ENCODE measurements at regions of chr14 and their contacts with region 1.

Region 1: DNA sequence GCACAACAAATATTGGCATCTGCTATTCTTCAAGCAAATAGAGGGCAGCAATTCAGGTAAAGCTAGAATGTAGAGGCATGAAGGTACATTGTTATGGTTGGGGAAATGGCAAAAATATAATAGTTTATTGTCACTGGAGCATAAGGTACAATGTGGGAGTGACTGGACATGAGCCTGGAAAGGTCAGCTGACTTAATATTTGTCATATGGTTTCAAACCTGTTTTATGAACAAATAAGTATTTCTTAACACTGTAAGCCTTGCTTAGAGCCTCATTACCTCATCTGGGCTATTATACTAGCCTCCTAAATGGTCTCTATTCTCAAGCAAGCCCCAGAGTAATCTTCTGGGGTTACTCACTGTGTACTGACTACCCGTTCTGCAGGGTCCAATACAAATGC is 33.7 kb downstream of the FAM177A1 start:
- DNase-seq: no peak
- H3K4me3 ChIP-seq: no peak overlapping the region
- H3K27ac ChIP-seq: no peak overlapping the region
- H3K4me1 ChIP-seq: no peaks in the 10 kb centered on the region
- H3K27me3 ChIP-seq: no peaks in the 10 kb centered on the region
- CTCF ChIP-seq: no peak

Region 2: DNA sequence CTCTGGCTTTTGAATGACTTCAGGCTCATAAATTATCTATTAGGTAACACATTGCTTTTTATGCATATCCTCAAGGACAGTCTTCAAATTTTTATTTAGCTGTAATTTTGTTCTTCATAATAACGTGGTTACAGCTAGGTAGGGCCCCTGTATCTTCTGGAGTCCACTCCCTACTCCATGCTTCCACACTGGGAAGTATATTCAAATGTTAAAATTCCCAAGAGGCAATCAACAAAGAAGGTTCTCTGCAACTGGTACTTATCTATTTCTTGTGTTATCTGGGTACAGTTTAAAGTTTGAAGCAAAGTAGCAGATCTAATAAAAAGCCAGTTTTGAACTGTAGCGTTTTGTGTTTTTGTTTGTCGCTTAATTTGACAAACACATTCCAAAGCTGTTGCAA is 184.5 kb before region 1 on chr14:
- CTCF ChIA-PET with region 1: no interaction called
- POLR2A ChIA-PET with region 1: no interaction called
- intact Hi-C with region 1: no loop called
- DNase-seq: no peak
- H3K4me3 ChIP-seq: no peak overlapping the region
- H3K27ac ChIP-seq: no peak overlapping the region
- H3K4me1 ChIP-seq: no peaks in the 10 kb centered on the region
- H3K27me3 ChIP-seq: no peaks in the 10 kb centered on the region
- CTCF ChIP-seq: no peak

Region 3: GRCh38 chr14:34999500-34999899 is 80.2 kb before region 1 on chr14:
- CTCF ChIA-PET with region 1: no interaction called
- POLR2A ChIA-PET with region 1: no interaction called
- intact Hi-C with region 1: no loop called
- DNase-seq: no peak
- H3K4me3 ChIP-seq: no peak overlapping the region
- H3K27ac ChIP-seq: no peak overlapping the region
- H3K4me1 ChIP-seq: peaks cover 15% of the 10 kb centered on the region
- H3K27me3 ChIP-seq: no peaks in the 10 kb centered on the region
- CTCF ChIP-seq: no peak

Region 4: DNA sequence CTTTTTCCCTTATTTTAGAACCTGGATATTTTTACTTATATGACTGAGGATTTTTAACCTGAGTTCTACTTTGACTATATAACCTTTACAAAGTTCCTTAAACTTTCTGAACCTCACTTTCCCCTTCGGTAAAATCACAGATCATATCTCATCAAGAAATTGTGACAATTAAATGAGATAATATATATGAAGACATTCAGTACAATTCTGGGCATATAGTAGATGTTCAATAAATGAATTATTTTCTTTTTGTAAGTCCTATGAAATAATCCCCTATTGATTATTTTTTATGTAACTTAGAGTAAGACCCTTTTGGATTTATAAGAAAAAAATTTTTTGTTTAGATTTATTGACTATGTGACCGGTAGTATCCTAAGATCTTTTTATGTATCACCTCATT is 51.3 kb before region 1 on chr14:
- CTCF ChIA-PET with region 1: no interaction called
- POLR2A ChIA-PET with region 1: interaction called, 14 read pairs
- intact Hi-C with region 1: no loop called
- DNase-seq: no peak
- H3K4me3 ChIP-seq: no peak overlapping the region
- H3K27ac ChIP-seq: no peak overlapping the region
- H3K4me1 ChIP-seq: no peaks in the 10 kb centered on the region
- H3K27me3 ChIP-seq: no peaks in the 10 kb centered on the region
- CTCF ChIP-seq: no peak

Region 5: GRCh38 chr14:35341446-35342159 is 261.9 kb after region 1 on chr14:
- CTCF ChIA-PET with region 1: no interaction called
- POLR2A ChIA-PET with region 1: no interaction called
- intact Hi-C with region 1: no loop called
- DNase-seq: peak; percentile 92
- H3K4me3 ChIP-seq: no peak overlapping the region
- H3K27ac ChIP-seq: peak overlapping the region; percentile 64
- H3K4me1 ChIP-seq: peaks cover 15% of the 10 kb centered on the region
- H3K27me3 ChIP-seq: no peaks in the 10 kb centered on the region
- CTCF ChIP-seq: no peak